Left lung (tissue), 14 donors: ENCODE measurements at regions of chr6 and their contacts with region 1.

Region 1: GRCh38 chr6:134174672-134175198 is 122.3 kb upstream of the SLC2A12 start:
- DNase-seq: peak; percentile 86 to 99 (median 94)
- ATAC-seq: peak; percentile 89
- H3K4me3 ChIP-seq: peak overlapping the region; percentile 69 to 76
- H3K27ac ChIP-seq: peak overlapping the region; percentile 99 to 100
- H3K4me1 ChIP-seq: peaks cover 3 to 71% of the 10 kb centered on the region in 2 donors
- H3K27me3 ChIP-seq: no peaks in the 10 kb centered on the region
- CTCF ChIP-seq: no peak

Region 2: GRCh38 chr6:134517145-134517658 is 342.5 kb after region 1 on chr6:
- intact Hi-C with region 1: loop called in 1 of 2 experiments (anchors 10 kb)
- DNase-seq: peak; percentile 60 to 87 (median 83)
- ATAC-seq: peak; percentile 90
- H3K4me3 ChIP-seq: no peak overlapping the region
- H3K27ac ChIP-seq: peak overlapping the region; percentile 73 to 79
- H3K4me1 ChIP-seq: peaks cover 25 to 50% of the 10 kb centered on the region in 2 donors
- H3K27me3 ChIP-seq: no peaks in the 10 kb centered on the region
- CTCF ChIP-seq: no peak

Region 3: DNA sequence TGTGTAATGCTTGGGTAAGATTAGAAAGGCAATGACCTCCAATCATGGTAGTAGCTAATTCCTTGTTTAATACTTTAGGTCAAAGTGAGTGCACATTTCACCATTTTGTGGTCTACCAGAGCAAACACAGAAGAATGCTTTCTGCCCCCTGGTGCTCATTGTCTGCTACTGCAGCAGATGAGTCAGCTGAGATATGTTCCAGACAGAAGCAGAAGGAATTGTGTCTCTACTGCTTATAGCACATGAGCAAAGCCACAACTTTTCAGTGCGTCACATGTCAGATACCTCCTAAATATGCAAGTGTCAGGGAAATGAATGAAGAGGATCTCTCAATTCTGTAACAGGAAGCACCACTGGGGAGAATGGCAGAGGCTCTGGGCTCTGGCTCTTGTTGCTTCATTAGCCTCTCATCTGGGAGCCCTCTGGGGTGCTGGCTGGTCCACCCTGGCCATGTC is 466.3 kb after region 1 on chr6:
- intact Hi-C with region 1: loop called in 1 of 2 experiments (anchors 5 kb)
- DNase-seq: peak in 3 of 4 donors; percentile 28 to 72 (median 65)
- ATAC-seq: peak; percentile 93
- H3K4me3 ChIP-seq: no peak overlapping the region
- H3K27ac ChIP-seq: peak overlapping the region in 1 of 2 donors; percentile 45
- H3K4me1 ChIP-seq: peaks cover 0 to 9% of the 10 kb centered on the region in 2 donors
- H3K27me3 ChIP-seq: no peaks in the 10 kb centered on the region
- CTCF ChIP-seq: peak; percentile 90 to 96

Region 4: GRCh38 chr6:134724771-134725340 is 550.1 kb after region 1 on chr6:
- intact Hi-C with region 1: loop called in 1 of 2 experiments (anchors 5 kb)
- DNase-seq: peak in 1 of 4 donors; percentile 55
- ATAC-seq: peak; percentile 65
- H3K4me3 ChIP-seq: no peak overlapping the region
- H3K27ac ChIP-seq: no peak overlapping the region
- H3K4me1 ChIP-seq: peaks cover 25 to 43% of the 10 kb centered on the region in 2 donors
- H3K27me3 ChIP-seq: no peaks in the 10 kb centered on the region
- CTCF ChIP-seq: no peak

Region 5: DNA sequence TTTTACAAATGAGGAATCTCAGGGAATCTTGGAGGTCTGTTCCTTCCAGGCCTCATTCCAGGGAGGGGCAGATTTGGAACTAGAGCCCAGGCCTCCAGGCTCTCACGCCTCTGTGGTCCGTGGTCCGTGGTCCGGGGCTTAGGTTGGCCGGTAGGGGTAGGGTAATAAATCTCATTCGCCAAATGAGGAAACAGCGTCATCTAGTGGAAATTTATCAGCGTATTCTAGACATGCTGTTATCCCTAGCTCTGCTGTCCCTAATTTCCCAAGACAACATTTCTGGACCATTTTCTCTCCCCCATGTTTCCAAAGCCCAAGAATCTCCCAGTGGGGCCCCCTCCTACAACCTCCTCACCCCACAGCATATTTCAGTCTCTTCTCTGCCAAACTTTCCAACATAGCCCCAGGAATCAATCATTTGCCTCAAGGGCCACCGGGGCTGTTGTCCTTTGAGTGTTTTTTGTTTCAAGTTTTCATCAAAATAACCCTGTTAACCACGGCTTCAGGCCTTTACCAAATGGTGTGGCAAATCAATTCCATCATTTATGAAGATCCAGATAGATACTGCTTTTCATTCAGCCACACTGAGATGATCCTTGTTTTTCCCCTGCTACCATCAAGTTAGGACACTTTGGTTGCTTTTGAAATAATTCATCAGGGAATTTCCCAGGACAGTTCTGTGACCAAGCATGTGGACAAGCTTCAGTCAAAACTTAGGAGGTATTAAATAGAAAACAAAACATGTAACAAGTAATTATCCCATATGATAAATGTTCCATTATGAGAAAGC is 648.4 kb after region 1 on chr6:
- intact Hi-C with region 1: loop called in 1 of 2 experiments (anchors 5 kb)
- DNase-seq: peak in 2 of 4 donors; percentile 66 to 80
- ATAC-seq: peak; percentile 95
- H3K4me3 ChIP-seq: no peak overlapping the region
- H3K27ac ChIP-seq: peak overlapping the region in 1 of 2 donors; percentile 8
- H3K4me1 ChIP-seq: peaks cover 3 to 8% of the 10 kb centered on the region in 2 donors
- H3K27me3 ChIP-seq: no peaks in the 10 kb centered on the region
- CTCF ChIP-seq: peak; percentile 76 to 90

Region 6: DNA sequence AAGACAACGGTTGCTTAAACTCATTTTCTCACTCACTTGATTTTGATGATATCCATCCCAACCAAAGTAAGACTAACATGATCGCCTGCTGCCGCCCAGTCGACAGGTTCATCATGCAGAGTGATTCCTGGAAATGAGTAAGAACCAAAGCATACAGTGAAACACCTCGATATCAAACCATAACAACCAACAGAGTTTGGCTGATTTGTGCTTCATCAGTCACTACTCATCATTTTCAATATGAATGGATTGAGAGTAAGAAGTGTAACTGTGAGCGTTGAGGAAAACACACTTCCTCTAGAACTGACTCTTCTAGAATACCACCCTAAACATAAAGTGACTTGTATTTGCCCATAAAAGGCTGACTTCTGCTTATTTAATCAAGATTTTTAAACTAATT is 804.4 kb after region 1 on chr6:
- intact Hi-C with region 1: no loop called
- DNase-seq: no peak
- ATAC-seq: no peak
- H3K4me3 ChIP-seq: no peak overlapping the region
- H3K27ac ChIP-seq: no peak overlapping the region
- H3K4me1 ChIP-seq: no peaks in the 10 kb centered on the region
- H3K27me3 ChIP-seq: no peaks in the 10 kb centered on the region
- CTCF ChIP-seq: no peak